ENCODE measurements at regions of chr9 and their contacts with region 1.

Region 1: DNA sequence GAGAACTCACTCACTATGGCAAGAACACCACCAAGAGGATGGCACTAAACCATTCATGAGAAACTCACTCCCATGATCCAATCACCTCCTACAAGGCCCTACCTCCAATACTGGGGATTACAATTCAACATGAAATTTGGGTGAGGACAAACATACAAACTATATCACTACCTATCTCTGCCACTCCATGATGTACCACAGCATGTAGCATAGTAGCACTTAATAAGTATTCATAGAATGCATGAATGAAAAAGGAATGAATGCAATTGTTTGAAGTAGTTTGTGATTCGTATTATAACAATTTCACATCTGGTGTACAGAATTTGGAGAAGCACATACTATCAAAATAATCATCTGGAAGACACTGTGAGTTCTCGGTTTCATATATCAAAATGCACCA is 27.9 kb upstream of the SLC24A2 start:
- DNase-seq: no peak
- H3K4me3 ChIP-seq: no peak overlapping the region
- H3K27ac ChIP-seq: no peak overlapping the region
- H3K4me1 ChIP-seq: no peaks in the 10 kb centered on the region
- H3K27me3 ChIP-seq: no peaks in the 10 kb centered on the region
- CTCF ChIP-seq: no peak

Region 2: GRCh38 chr9:19451240-19452087 is 365.3 kb before region 1 on chr9:
- CTCF ChIA-PET with region 1: no interaction called
- POLR2A ChIA-PET with region 1: no interaction called
- intact Hi-C with region 1: no loop called
- DNase-seq: no peak
- H3K4me3 ChIP-seq: no peak overlapping the region
- H3K27ac ChIP-seq: no peak overlapping the region
- H3K4me1 ChIP-seq: no peaks in the 10 kb centered on the region
- H3K27me3 ChIP-seq: no peaks in the 10 kb centered on the region
- CTCF ChIP-seq: no peak

Region 3: DNA sequence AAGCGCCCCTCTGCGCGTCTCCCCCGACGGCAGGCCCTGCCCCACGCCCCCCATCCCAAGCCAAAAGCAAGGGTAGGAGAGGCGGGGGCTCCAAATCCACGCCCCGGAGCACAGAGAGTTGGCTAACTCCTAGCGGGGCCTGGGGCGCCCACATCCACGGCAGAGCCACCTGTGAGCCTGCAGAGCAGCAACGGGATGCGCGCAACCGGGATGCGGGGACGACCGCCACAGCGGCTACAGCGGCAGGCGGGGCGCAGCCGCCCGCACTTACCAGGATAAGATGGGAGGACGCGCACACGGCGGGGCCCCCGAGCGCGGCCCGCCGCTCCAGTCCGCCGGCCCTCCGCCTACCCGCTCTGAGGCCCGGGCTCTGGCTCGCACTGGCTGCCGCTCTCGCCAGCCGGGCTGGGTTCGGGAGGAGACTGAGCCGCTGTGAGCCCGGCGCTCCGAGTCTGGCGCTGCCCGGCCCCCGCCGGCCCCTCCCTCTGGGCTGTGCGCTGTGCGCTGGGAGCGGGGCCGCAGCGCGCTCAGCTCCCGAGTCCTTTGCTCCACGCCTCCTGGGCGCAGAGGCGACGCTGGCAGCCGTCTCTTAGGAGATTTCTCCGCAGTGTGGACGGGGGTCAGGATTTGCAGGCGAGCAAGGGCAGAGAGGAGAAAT is 28.0 kb before region 1 on chr9 and contains the start of gene SLC24A2:
- CTCF ChIA-PET with region 1: interaction called, 12 read pairs
- POLR2A ChIA-PET with region 1: no interaction called
- intact Hi-C with region 1: no loop called
- DNase-seq: no peak
- H3K4me3 ChIP-seq: no peak within 1 kb of the TSS
- H3K27ac ChIP-seq: no peak within 1 kb of the TSS
- H3K4me1 ChIP-seq: no peaks in the 10 kb centered on the region
- H3K27me3 ChIP-seq: peaks cover 52% of the 10 kb centered on the region
- CTCF ChIP-seq: no peak
- total RNA-seq, gene SLC24A2: not detected in 2 replicates